ENCODE measurements at regions of chr2 and their contacts with region 1.

Region 1: GRCh38 chr2:30711646-30712085 is 95.6 kb downstream of the CAPN13 start:
- ATAC-seq: peak; percentile 42 to 87 (median 57)
- H3K4me3 ChIP-seq: no peak overlapping the region
- H3K27ac ChIP-seq: no peak overlapping the region
- H3K4me1 ChIP-seq: peaks cover 0 to 5% of the 10 kb centered on the region in 2 donors

Region 2: DNA sequence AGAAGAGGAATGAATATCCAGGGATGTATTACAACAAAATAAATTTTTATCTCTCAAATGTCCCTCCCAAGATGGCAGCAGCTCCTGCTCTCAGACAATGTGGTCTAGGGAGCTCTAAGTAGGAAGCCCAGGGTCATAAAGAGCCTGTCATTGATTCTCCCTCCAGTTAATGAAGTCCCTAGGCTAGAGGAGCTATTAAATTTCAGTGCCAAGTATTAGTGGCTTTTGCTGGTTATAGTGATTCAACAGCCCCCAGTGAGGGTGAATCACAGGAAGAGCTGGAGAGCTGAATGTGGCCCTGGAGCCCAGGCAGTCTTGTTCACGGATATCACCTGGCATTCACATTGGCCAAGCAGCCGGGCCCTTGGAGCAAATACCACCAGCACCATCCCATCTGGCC is 674.6 kb before region 1 on chr2:
- in situ Hi-C with region 1: no loop called
- ATAC-seq: no peak
- H3K4me3 ChIP-seq: no peak overlapping the region
- H3K27ac ChIP-seq: no peak overlapping the region
- H3K4me1 ChIP-seq: no peaks in the 10 kb centered on the region

Region 3: GRCh38 chr2:30149513-30149912 is 562.2 kb before region 1 on chr2:
- in situ Hi-C with region 1: no loop called
- ATAC-seq: no peak
- H3K4me3 ChIP-seq: no peak overlapping the region
- H3K27ac ChIP-seq: no peak overlapping the region
- H3K4me1 ChIP-seq: peaks cover 5 to 7% of the 10 kb centered on the region in 2 donors

Region 4: DNA sequence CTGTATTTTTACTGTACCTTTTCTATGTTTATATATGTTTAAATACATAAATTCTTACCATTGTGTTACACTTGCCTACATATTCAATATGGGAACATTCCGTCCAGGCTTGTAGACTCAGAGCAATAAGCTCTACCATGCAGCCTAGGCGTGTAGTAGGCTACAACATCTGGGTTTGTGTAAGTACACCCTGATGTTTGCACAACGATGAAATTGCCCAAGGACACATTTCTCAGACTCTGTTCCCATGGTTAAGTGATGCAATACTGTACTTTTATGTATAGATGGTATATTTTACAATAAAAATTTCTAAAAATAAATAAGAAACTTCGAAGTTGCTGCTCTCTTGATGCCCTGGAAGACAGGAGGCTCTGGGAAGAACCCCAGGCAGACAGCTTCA is 526.5 kb before region 1 on chr2:
- in situ Hi-C with region 1: loop called in 1 of 9 experiments (anchors 10 kb)
- ATAC-seq: peak in 3 of 8 experiments; percentile 16 to 80 (median 44)
- H3K4me3 ChIP-seq: no peak overlapping the region
- H3K27ac ChIP-seq: no peak overlapping the region
- H3K4me1 ChIP-seq: no peaks in the 10 kb centered on the region

Region 5: GRCh38 chr2:30208452-30208851 is 503.2 kb before region 1 on chr2:
- in situ Hi-C with region 1: loop called (anchors 10 to 25 kb)
- ATAC-seq: peak; percentile 75 to 99 (median 93)
- H3K4me3 ChIP-seq: no peak overlapping the region
- H3K27ac ChIP-seq: no peak overlapping the region
- H3K4me1 ChIP-seq: peaks cover 0 to 9% of the 10 kb centered on the region in 2 donors

Region 6: DNA sequence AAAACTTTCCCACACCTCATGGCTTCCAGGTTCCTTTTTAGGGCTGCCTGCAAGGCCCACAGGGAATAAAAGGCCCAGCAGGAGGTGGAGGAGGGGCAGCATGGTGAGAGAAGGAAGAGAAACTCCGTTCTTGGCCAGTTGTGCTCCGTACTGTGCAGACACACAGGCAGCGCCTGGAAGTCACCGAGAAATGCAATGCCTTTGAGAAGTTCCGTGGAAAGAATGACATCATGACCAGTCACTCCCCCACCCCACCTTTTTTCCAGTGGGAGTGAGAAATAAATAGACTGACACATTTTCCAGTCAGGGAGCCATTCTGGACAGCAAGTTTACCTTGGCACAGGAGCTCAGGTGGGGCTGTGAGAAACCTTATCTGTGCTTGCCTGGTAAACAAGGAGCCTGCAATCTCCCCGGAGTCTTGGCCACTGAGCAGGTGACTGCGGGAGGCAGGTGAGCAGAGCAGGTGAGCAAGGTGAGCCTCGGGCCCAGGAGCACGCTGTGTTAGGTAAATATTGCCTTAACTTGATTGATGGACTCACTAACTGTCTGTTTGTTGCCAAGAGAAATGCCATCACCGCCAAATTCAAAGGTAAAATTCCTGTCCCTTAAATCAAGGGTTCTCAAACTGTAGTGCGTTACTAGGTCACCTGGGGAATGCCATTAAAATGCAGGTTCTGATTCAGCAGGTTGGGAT is 493.9 kb before region 1 on chr2:
- in situ Hi-C with region 1: loop called in 6 of 9 experiments (anchors 10 to 25 kb)
- ATAC-seq: peak in 1 of 8 experiments; percentile 37
- H3K4me3 ChIP-seq: no peak overlapping the region
- H3K27ac ChIP-seq: no peak overlapping the region
- H3K4me1 ChIP-seq: no peaks in the 10 kb centered on the region

Region 7: GRCh38 chr2:31097962-31098613 is 386.4 kb after region 1 on chr2:
- in situ Hi-C with region 1: no loop called
- ATAC-seq: no peak
- H3K4me3 ChIP-seq: no peak overlapping the region
- H3K27ac ChIP-seq: no peak overlapping the region
- H3K4me1 ChIP-seq: no peaks in the 10 kb centered on the region

Region 8: DNA sequence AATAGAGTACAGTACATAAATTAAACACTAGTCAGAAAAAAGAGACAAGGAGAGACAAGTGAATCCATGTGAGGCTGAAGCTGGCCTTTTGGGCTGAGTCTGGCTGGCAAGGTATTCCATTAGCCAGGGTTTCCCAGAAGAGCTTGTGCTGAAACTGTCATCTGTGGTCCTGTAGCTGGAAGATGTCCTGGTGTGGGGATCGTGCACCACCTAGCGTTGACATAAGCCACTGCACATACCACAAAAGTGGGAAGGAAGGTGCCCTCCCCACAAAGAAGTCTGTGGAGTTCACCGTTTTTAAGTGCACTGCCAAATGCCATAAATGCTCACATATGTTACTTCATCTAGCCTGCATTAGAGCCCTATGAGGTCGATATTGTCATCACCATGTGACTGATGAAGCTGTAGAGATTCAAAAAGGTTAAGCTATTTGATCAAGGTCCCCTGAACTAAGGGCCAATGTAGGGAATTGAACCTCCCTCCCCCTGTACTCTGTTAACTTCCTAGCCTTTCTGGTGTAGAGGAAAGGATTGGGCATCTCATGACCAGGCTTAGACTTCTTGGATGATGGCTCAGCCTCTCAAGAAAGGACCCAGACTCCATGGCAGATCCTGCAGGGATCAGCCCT is 458.5 kb after region 1 on chr2:
- in situ Hi-C with region 1: loop called in 6 of 9 experiments (anchors 25 kb)
- ATAC-seq: peak; percentile 76 to 98 (median 88)
- H3K4me3 ChIP-seq: no peak overlapping the region
- H3K27ac ChIP-seq: no peak overlapping the region
- H3K4me1 ChIP-seq: peaks cover 0 to 3% of the 10 kb centered on the region in 2 donors

Region 9: DNA sequence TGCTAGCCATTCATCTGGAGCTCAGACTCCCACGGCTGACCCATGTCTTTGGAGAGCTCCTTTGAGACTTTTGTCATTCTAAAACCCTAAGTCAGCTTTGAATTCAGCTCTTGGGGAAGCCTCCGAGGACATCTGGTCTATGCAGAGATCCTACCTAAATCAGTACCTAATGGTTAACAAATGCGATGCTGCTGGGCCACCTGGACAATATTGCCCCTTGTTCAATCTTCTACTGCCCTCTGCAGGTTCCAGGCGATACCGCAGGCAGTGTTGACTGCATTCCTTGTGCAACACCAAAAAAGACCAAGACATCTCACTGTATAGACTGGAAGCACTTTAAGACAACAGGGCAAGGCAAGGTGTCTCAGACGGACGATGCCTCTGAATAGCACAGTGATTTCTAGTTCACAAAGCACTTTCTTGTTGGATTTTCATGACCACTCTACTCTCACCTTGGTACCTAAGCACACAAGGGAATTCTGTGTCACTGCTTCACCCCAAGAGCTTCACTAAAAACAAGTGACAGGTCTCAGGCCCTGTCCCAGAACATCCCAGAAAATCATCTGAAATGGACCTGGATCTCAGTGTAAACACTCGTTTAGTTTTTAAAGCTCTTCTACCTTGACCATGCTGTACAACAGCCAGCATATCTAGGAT is 622.0 kb after region 1 on chr2:
- in situ Hi-C with region 1: loop called in 7 of 9 experiments (anchors 10 to 25 kb)
- ATAC-seq: peak; percentile 71 to 92 (median 85)
- H3K4me3 ChIP-seq: no peak overlapping the region
- H3K27ac ChIP-seq: no peak overlapping the region
- H3K4me1 ChIP-seq: no peaks in the 10 kb centered on the region

Region 10: GRCh38 chr2:31666878-31667277 is 955.2 kb after region 1 on chr2:
- in situ Hi-C with region 1: no loop called
- ATAC-seq: no peak
- H3K4me3 ChIP-seq: no peak overlapping the region
- H3K27ac ChIP-seq: no peak overlapping the region
- H3K4me1 ChIP-seq: no peaks in the 10 kb centered on the region